ENCODE measurements at regions of chr18 and their contacts with region 1.

Region 1: GRCh38 chr18:42850174-42851083 is 265.1 kb downstream of the RIT2 start:
- DNase-seq: no peak
- H3K4me3 ChIP-seq: no peak overlapping the region
- H3K27ac ChIP-seq: no peak overlapping the region
- H3K4me1 ChIP-seq: no peaks in the 10 kb centered on the region
- H3K27me3 ChIP-seq: no peaks in the 10 kb centered on the region

Region 2: DNA sequence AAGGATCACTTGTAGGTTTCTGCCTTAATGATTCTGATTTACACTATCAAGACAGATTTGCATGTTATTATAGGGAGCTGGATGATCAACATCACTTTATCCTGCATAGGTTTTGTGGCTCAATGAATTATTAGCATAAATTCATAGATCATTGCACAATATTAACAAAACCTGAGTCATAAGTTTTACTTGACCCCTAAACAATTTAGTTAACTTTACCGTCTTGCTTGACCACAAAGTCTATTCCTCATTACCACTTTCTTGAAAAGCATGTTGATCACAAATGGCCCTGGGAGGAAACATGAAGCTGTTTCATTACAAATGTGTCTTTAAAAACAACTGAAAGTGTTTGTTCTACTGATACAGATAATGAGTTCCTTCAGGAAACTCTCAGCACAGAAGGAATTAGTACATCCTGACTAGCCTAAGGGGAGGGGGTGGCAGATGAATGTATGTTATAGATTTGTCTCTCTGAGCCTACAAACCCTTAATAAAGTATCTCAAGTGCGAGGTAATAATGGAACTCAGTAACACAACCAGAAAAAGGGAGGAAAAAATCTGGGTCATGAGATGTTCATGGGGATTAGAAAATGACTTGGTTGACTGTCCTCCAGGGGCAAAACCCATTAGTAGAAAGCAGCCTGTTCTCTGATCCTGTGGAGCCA is 592.0 kb before region 1 on chr18:
- in situ Hi-C with region 1: no loop called
- DNase-seq: no peak
- H3K4me3 ChIP-seq: no peak overlapping the region
- H3K27ac ChIP-seq: no peak overlapping the region
- H3K4me1 ChIP-seq: no peaks in the 10 kb centered on the region
- H3K27me3 ChIP-seq: no peaks in the 10 kb centered on the region

Region 3: GRCh38 chr18:42915299-42915698 is 64.9 kb after region 1 on chr18:
- in situ Hi-C with region 1: loop called (anchors 10 kb)
- DNase-seq: no peak
- H3K4me3 ChIP-seq: no peak overlapping the region
- H3K27ac ChIP-seq: no peak overlapping the region
- H3K4me1 ChIP-seq: no peaks in the 10 kb centered on the region
- H3K27me3 ChIP-seq: no peaks in the 10 kb centered on the region

Measured in GM23248 (cell line).